ENCODE measurements at regions of chr14 and their contacts with region 1.

Region 1: GRCh38 chr14:35416108-35416750 is 11.7 kb upstream of the NFKBIA start:
- DNase-seq: peak; percentile 66
- H3K4me3 Mint-ChIP-seq: peak overlapping the region; percentile 38
- H3K27ac Mint-ChIP-seq: peak overlapping the region; percentile 88
- H3K4me1 Mint-ChIP-seq: peaks cover 46% of the 10 kb centered on the region
- H3K27me3 Mint-ChIP-seq: no peaks in the 10 kb centered on the region

Region 2: DNA sequence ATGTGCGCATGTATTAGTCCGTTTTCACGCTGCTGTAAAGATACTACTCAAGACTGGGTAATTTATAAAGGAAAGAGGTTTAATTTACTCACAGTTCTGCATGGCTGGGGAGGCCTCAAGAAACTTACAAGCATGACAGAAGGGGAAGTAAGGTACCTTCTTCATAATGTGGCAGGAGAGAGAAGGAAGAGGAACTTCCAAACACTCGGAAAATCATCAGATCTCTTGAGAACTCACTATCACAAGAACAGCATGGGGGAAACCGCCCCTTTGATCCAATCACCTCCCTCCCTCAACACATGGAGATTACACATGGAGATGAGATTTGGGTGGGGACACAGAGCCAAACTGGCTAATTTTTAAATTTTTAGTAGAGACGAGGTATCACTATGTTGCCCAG is 744.5 kb before region 1 on chr14:
- CTCF ChIA-PET with region 1: interaction called, 27 read pairs
- DNase-seq: no peak
- H3K4me3 Mint-ChIP-seq: no peak overlapping the region
- H3K27ac Mint-ChIP-seq: no peak overlapping the region
- H3K4me1 Mint-ChIP-seq: no peaks in the 10 kb centered on the region
- H3K27me3 Mint-ChIP-seq: no peaks in the 10 kb centered on the region

Region 3: DNA sequence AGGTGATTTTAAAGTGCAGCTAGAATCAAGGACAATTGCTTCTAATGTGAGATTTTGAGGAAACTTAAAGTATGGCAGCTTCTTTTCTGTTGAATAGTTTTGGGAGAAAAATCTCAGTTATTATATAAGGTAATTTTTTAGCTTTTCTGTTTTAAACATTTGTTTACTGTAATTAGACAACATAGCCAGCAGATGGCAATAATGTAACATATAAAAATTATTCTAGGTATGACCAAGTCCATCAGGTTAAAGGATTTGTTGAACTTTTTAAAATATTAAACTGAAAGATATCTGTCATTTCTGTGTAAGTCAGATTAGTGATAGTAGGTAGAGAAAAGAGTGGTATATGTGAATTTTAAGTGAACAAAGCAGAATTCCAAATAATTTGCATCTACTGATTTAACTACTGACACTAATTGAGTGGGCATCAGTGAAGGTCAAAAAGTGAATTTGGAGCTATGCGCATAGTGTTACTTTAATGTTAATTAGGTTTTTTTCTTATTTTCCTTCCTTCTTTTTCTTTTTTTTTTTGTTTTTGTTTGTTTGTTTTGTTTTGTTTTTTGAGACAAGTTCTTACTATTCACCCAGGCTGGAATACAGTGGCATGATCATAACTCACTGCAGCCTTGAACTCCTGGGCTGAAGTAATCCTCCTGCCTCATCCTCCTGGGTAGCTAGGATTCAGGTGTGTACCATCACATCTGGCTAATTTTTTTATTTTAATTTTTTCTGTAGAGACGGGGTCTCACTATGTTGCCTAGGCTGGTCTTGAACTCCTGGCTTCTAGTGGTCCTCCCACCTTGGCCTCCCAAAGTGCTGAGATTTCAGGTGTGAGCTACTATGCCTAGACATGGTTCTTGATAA is 275.3 kb before region 1 on chr14:
- CTCF ChIA-PET with region 1: interaction called, 50 read pairs
- DNase-seq: no peak
- H3K4me3 Mint-ChIP-seq: no peak overlapping the region
- H3K27ac Mint-ChIP-seq: no peak overlapping the region
- H3K4me1 Mint-ChIP-seq: peaks cover 3% of the 10 kb centered on the region
- H3K27me3 Mint-ChIP-seq: no peaks in the 10 kb centered on the region

Region 4: DNA sequence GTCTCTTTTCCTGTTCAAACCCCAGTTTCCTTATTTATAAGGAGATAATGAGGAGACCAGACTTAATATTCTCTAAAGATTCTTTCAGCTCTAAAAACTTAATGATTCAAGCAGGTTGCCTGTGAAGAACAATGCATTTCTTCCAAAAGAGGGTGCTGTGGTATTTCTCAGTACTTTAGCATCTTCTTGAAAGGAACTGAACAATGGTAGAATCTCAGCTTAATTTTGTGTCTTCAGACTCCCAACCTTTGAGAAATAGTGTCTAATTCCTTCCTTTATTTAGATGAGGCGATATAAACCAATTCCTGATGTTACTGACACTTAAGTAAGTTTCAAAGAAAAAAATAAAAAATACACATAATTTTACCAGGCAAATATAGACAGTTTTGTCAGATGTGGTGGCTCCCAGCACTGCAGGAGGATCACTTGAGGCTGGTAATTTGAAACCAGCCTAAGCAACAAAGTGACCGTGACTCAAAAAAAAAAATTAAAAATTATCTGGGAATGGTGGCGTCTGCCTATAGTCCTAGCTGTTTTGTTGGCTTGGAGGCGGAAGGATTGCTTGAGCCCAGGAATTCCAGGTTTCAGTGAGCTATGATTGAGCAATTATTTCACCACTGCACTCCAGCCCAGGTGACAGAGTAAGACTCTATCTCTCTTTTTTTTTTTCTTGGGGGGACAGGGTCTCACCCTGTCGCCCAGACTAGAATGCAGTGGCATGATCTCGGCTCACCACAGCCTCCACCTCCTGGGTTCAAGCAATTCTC is 200.9 kb before region 1 on chr14:
- CTCF ChIA-PET with region 1: interaction called, 19 read pairs
- DNase-seq: no peak
- H3K4me3 Mint-ChIP-seq: no peak overlapping the region
- H3K27ac Mint-ChIP-seq: no peak overlapping the region
- H3K4me1 Mint-ChIP-seq: peaks cover 24% of the 10 kb centered on the region
- H3K27me3 Mint-ChIP-seq: no peaks in the 10 kb centered on the region

Region 5: GRCh38 chr14:35229495-35230089 is 186.6 kb before region 1 on chr14:
- CTCF ChIA-PET with region 1: interaction called, 57 read pairs
- DNase-seq: no peak
- H3K4me3 Mint-ChIP-seq: no peak overlapping the region
- H3K27ac Mint-ChIP-seq: no peak overlapping the region
- H3K4me1 Mint-ChIP-seq: peaks cover 20% of the 10 kb centered on the region
- H3K27me3 Mint-ChIP-seq: no peaks in the 10 kb centered on the region

Region 6: GRCh38 chr14:35446450-35446849 is 30.2 kb after region 1 on chr14:
- CTCF ChIA-PET with region 1: no interaction called
- DNase-seq: no peak
- H3K4me3 Mint-ChIP-seq: no peak overlapping the region
- H3K27ac Mint-ChIP-seq: no peak overlapping the region
- H3K4me1 Mint-ChIP-seq: no peaks in the 10 kb centered on the region
- H3K27me3 Mint-ChIP-seq: no peaks in the 10 kb centered on the region

Measured in activated naive CD4-positive, alpha-beta T cell treated with anti-CD3 and anti-CD28 coated beads, Interleukin-2, amount 10 ng/mL, durations not matched to agents 7 days and 5 days (primary cell).